ENCODE measurements at regions of chr7 and their contacts with region 1.

Region 1: DNA sequence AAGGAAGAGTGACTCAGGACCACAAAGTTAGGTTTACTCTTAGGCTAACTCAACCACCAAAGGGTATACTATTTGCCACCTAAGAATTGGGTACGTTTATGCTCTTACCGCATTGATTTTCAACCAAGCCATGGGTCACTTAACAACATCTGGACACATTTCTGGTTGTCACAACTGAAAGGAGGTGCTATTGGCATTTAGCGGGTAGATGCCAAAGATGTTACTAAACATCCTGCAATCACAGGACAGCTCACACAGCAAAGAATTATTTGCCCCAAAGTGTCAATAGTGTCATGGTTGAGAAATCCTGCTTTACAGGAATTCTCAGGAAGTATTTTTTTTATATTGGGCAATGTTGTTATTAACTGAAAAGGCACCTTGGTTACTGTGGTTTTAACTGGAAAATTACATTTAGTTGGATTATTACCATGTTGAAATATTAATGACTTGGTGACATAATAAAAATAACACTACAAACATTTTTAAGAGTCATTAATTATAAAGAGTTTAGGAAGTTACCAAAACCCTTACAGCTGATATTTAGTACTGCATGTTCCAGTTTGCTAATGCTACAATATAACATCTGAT is 185.0 kb upstream of the TMEM196 start:
- DNase-seq: peak; percentile 80
- H3K4me3 ChIP-seq: no peak overlapping the region
- H3K27ac ChIP-seq: peak overlapping the region; percentile 83
- H3K4me1 ChIP-seq: peaks cover 17% of the 10 kb centered on the region
- H3K27me3 ChIP-seq: no peaks in the 10 kb centered on the region
- CTCF ChIP-seq: no peak
- POLR2A ChIP-seq: no peak

Region 2: DNA sequence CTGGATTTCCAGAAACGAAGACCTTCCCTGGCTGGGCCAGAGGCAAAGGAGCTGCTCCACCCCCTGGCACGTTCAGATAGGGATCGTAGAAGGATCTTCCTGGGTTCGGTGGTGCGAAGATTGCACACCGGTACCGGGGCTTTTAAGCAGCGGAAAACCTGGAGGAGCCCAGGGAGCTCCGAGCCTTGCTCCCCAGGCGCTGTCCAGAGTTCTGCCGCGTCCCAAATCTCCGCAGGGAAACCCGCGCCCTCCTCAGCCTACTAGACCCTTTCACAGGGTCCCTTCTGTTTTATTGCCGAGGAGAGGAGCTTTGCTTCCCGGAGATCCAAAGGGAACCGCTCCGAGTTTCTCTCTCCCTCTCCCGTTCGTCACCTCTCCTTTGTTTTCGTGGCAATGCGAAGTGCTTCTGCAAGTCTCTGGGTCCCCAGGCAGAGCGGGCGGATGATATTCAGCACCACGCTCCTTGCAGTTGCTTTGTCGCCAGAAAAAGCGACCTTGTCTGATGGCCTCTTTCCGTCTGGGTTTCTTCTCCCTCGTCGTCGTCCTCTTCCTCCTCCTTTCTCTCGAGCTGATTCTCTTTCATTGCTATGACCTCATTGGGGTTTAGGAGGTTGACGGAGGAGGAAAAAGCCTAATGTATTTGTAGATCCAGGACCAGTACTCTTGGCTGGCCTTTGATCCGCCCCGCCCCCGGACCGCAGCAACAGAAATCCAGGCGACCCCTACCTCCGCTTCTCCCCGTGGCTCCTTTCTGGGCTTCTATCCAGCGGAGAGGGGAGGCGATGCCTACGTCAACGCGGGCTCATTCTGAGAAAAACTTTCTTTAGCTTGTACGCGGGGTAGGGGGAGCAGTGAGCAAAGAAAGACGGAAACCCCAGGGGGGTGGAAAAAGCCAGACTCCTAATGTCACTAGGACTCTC is 185.3 kb before region 1 on chr7 and contains the start of gene TMEM196:
- CTCF ChIA-PET with region 1: no interaction called
- POLR2A ChIA-PET with region 1: no interaction called
- dilution Hi-C with region 1: no loop called
- intact Hi-C with region 1: loop called (anchors 5 kb)
- DNase-seq: peak; percentile 37
- H3K4me3 ChIP-seq: no peak within 1 kb of the TSS
- H3K27ac ChIP-seq: no peak within 1 kb of the TSS
- H3K4me1 ChIP-seq: no peaks in the 10 kb centered on the region
- H3K27me3 ChIP-seq: peaks cover 7 to 14% of the 10 kb centered on the region in 2 experiments
- CTCF ChIP-seq: no peak
- POLR2A ChIP-seq: no peak
- total RNA-seq, gene TMEM196: not detected in 2 replicates

Region 3: GRCh38 chr7:19919261-19920095 is 38.9 kb before region 1 on chr7:
- CTCF ChIA-PET with region 1: interaction called, 6 read pairs
- POLR2A ChIA-PET with region 1: no interaction called
- dilution Hi-C with region 1: no loop called
- intact Hi-C with region 1: loop called (anchors 1 kb)
- DNase-seq: peak; percentile 80
- H3K4me3 ChIP-seq: no peak overlapping the region
- H3K27ac ChIP-seq: peak overlapping the region; percentile 66
- H3K4me1 ChIP-seq: peaks cover 42% of the 10 kb centered on the region
- H3K27me3 ChIP-seq: no peaks in the 10 kb centered on the region
- CTCF ChIP-seq: no peak
- POLR2A ChIP-seq: no peak